ENCODE measurements at regions of chr12 and their contacts with region 1.

Region 1: GRCh38 chr12:68686595-68687521 is at the start of gene NUP107:
- DNase-seq: peak; percentile 99
- H3K4me3 ChIP-seq: peak within 1 kb of the TSS; percentile 67 to 78
- H3K27ac ChIP-seq: peak within 1 kb of the TSS; percentile 69 to 80
- H3K4me1 ChIP-seq: peaks cover 0 to 12% (median 12%) of the 10 kb centered on the region in 4 donors
- H3K27me3 ChIP-seq: no peaks in the 10 kb centered on the region
- CTCF ChIP-seq: peak; percentile 29

Region 2: DNA sequence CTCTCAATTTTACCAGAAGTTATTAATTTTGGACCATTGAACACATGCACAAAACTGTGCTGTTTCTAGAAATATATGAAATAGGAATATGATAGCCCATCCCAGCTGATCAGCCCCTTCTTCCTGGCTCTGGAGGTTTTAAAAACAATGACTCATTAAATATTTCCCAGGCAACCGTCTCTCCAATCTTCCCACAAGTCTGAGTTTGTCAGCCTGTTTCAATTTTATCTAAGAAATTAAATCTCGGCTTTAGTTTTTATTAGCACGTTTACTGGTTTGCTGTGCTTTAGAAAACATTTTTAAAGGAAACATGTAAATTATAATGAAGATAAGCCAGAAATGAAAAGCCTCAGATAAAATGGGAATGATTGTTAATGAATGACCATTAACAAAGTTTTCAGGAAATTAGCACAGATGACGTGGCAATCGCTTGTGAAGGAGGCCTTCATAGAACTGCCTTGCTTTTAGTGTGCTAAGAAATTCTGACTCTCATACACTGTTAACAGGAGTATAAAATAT is 165.5 kb before region 1 on chr12:
- intact Hi-C with region 1: no loop called
- DNase-seq: no peak
- H3K4me3 ChIP-seq: peak overlapping the region in 1 of 2 donors; percentile 3
- H3K27ac ChIP-seq: peak overlapping the region; percentile 51 to 62
- H3K4me1 ChIP-seq: peaks cover 0 to 26% (median 11%) of the 10 kb centered on the region in 4 donors
- H3K27me3 ChIP-seq: no peaks in the 10 kb centered on the region
- CTCF ChIP-seq: no peak

Region 3: DNA sequence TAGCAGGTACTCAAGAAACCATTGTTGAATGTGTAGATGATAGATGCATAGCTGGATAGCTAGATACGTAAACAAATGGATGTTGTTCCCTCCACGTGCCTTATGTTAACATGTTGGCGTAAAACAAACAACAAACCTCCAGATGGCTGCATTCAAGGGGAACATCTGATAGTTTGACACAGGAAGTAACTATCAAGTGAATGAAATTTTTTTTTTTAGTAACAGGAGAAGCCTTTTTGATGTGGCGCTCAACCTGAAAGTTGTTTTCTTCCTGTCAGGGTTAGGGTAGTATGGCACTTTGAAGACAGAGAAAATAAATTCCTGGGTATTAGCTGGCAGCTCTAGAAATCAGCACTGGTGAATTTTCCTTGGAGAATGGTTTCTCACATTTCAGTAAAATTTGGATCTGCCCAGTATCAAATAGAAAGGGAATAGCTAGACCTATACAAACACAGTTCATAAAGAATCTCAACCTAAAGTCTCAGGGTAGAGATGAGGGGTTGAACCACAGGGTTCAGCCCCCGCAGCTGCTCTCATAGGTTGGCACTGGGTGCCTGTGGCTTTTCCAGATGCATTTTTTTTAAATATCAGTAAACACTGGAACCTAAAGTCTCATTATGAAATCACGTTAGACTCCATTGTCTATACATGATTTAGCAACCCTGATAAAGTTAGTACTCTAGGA is 95.0 kb before region 1 on chr12:
- intact Hi-C with region 1: no loop called
- DNase-seq: no peak
- H3K4me3 ChIP-seq: no peak overlapping the region
- H3K27ac ChIP-seq: no peak overlapping the region
- H3K4me1 ChIP-seq: no peaks in the 10 kb centered on the region
- H3K27me3 ChIP-seq: no peaks in the 10 kb centered on the region
- CTCF ChIP-seq: no peak

Region 4: DNA sequence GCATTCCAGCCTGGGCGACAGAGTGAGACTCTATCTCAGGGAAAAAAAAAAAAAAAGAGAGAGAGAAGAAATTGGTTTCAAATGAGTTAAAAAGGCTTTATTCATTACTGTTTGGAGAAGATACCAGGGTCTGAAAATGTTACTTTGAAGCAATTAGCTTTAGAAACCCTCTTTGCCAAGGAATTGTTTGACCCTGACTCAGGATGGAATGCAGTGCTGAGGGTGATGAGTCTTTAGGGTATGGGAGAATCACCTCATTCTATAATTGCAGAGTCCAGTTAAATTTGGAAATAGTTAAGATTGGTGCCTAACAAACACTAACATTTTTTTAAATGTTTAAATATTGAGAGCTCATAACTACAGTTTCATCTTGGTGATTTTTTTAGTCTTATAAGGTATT is 62.9 kb before region 1 on chr12:
- intact Hi-C with region 1: loop called (anchors 10 kb)
- DNase-seq: no peak
- H3K4me3 ChIP-seq: no peak overlapping the region
- H3K27ac ChIP-seq: no peak overlapping the region
- H3K4me1 ChIP-seq: peaks cover 4 to 70% (median 45%) of the 10 kb centered on the region in 4 donors
- H3K27me3 ChIP-seq: no peaks in the 10 kb centered on the region
- CTCF ChIP-seq: no peak